Activated B cell treated with CpG ODN at 0.5 μM for 24 hours (primary cell): ENCODE measurements at regions of chr16 and their contacts with region 1.

Region 1: GRCh38 chr16:70653809-70654771 is 7.7 kb downstream of the IL34 start:
- DNase-seq: peak; percentile 61
- ATAC-seq: peak; percentile 82
- H3K4me3 Mint-ChIP-seq: no peak overlapping the region
- H3K27ac Mint-ChIP-seq: no peak overlapping the region
- H3K4me1 Mint-ChIP-seq: peaks cover 5% of the 10 kb centered on the region
- H3K27me3 Mint-ChIP-seq: peaks cover 3% of the 10 kb centered on the region
- CTCF ChIP-seq: peak; percentile 20

Region 2: GRCh38 chr16:70162041-70162451 is 492.0 kb before region 1 on chr16:
- CTCF ChIA-PET with region 1: interaction called, 4 read pairs
- POLR2A ChIA-PET with region 1: no interaction called
- intact Hi-C with region 1: loop called (anchors 10 kb)
- DNase-seq: no peak
- ATAC-seq: no peak
- H3K4me3 Mint-ChIP-seq: no peak overlapping the region
- H3K27ac Mint-ChIP-seq: peak overlapping the region; percentile 4
- H3K4me1 Mint-ChIP-seq: peaks cover 3% of the 10 kb centered on the region
- H3K27me3 Mint-ChIP-seq: no peaks in the 10 kb centered on the region
- CTCF ChIP-seq: no peak

Region 3: GRCh38 chr16:70370924-70371323 is 283.2 kb before region 1 on chr16:
- CTCF ChIA-PET with region 1: interaction called, 4 read pairs
- POLR2A ChIA-PET with region 1: no interaction called
- intact Hi-C with region 1: loop called (anchors 1 kb)
- DNase-seq: no peak
- ATAC-seq: no peak
- H3K4me3 Mint-ChIP-seq: no peak overlapping the region
- H3K27ac Mint-ChIP-seq: no peak overlapping the region
- H3K4me1 Mint-ChIP-seq: peaks cover 2% of the 10 kb centered on the region
- H3K27me3 Mint-ChIP-seq: no peaks in the 10 kb centered on the region
- CTCF ChIP-seq: no peak

Region 4: GRCh38 chr16:70508752-70509151 is 145.3 kb before region 1 on chr16:
- CTCF ChIA-PET with region 1: no interaction called
- POLR2A ChIA-PET with region 1: no interaction called
- intact Hi-C with region 1: loop called (anchors 5 kb)
- DNase-seq: no peak
- ATAC-seq: no peak
- H3K4me3 Mint-ChIP-seq: no peak overlapping the region
- H3K27ac Mint-ChIP-seq: no peak overlapping the region
- H3K4me1 Mint-ChIP-seq: peaks cover 8% of the 10 kb centered on the region
- H3K27me3 Mint-ChIP-seq: no peaks in the 10 kb centered on the region
- CTCF ChIP-seq: no peak

Region 5: DNA sequence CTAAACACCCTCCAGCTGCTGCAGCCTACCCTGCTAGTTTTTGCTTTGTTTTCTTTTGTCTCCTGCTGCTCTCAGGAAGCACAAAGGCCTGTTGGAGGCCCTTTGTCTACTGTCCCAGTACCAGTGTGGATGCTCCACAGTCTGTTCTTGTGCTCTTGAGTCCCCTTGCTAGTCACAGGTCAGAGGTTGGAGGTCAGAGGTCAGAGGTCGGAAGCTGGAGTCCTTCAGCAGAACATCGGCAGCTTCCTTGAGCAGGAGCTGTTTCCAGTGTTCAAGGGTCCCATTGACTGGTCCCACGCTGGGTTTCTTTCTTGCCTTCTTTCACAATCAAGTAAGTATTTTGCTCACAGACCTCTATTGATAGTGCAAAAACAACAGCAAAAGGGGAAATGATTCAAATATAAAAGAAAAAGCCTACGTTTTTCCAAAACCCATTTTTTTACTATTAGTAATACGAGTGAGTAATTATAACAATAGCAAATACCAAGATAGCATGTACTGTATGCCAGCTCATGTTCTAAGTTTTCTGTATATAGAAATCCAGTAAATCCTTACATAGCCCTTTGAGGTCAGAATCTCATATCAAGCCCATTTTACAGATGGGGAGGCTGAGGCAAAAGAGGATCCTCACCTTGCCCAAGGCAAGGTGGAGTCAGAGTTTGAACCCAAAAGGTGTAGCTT is 18.6 kb before region 1 on chr16:
- CTCF ChIA-PET with region 1: no interaction called
- POLR2A ChIA-PET with region 1: no interaction called
- intact Hi-C with region 1: no loop called
- DNase-seq: no peak
- ATAC-seq: no peak
- H3K4me3 Mint-ChIP-seq: no peak overlapping the region
- H3K27ac Mint-ChIP-seq: no peak overlapping the region
- H3K4me1 Mint-ChIP-seq: no peaks in the 10 kb centered on the region
- H3K27me3 Mint-ChIP-seq: peaks cover 13% of the 10 kb centered on the region
- CTCF ChIP-seq: no peak